Activated naive CD8-positive, alpha-beta T cell treated with anti-CD3 and anti-CD28 coated beads, Interleukin-2, amount 10 ng/mL, durations not matched to agents 7 days and 5 days (primary cell): ENCODE measurements at regions of chr1 and their contacts with region 1.

Region 1: DNA sequence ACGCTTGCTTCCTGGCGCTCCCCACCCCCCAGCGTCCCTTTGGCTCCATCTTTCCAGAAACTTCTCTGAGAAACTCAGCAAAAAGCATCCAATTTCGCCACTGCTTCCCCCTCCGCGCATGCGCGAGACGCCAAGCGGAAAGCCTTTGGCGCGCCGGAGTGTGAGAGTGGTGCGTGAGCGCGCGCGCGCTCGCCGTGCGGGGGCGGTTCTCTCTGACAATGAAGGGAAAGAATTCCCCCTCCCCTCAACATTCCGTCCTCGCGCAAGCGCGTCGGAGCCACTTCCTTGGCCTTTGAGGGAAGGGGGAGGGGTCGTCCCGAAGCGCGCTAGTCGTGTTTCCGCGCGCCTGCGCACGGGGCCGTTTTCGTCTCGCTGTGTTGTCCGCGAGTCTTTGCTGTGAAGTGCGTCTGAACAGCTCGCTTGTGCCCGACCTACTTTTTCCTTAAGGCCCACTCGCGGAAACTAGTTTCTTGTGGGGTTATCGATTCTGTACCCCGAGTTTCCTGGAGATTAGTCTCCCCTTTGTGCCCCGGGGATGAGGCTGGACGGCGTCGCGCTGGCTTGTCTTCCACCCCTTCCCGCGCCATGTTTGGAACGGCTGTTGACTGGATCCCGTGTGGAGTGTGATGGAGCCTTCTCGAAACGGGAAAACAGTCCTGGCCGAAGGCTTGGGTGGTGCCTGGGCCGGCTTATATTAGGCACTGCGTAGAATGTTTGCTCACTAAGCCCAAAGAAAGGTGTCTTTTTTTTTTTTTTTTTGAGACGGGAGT is 11.6 kb upstream of the SPEN start:
- DNase-seq: peak; percentile 99
- ATAC-seq: peak; percentile 64
- H3K4me3 Mint-ChIP-seq: peak overlapping the region; percentile 93
- H3K27ac Mint-ChIP-seq: peak overlapping the region; percentile 99
- H3K4me1 Mint-ChIP-seq: peaks cover 24% of the 10 kb centered on the region
- H3K27me3 Mint-ChIP-seq: no peaks in the 10 kb centered on the region

Region 2: DNA sequence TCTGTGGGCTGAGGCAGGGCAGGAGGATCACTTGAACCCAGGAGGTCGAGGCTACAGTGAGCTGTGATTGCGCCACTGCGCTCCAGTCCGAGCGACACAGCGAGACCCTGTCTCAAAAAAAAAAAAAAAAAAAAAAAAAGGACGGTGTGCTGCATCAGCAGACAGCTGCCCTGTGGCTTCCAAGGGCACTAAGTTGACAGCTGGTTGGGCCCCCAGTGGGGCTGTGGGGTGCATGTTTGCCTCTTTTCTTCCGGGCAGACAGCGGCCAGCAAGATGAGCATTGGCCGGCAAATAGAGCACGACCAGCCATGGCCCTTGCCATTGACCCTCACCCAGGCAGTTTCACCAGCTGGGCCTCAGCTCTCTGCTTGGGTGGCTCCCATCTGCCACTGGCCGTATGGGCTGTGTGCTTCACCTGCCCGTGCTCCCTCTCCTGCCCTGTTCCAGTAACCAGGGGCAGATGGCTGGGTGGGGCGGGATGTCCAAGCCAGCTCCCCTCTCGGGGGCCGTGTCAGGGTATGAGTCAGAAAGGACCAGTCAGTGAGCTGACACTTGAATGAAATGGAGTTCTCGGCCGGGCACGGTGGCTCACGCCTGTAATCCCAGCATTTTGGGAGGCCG is 112.2 kb before region 1 on chr1:
- POLR2A ChIA-PET with region 1: no interaction called
- DNase-seq: no peak
- ATAC-seq: no peak
- H3K4me3 Mint-ChIP-seq: no peak overlapping the region
- H3K27ac Mint-ChIP-seq: no peak overlapping the region
- H3K4me1 Mint-ChIP-seq: no peaks in the 10 kb centered on the region
- H3K27me3 Mint-ChIP-seq: no peaks in the 10 kb centered on the region

Region 3: DNA sequence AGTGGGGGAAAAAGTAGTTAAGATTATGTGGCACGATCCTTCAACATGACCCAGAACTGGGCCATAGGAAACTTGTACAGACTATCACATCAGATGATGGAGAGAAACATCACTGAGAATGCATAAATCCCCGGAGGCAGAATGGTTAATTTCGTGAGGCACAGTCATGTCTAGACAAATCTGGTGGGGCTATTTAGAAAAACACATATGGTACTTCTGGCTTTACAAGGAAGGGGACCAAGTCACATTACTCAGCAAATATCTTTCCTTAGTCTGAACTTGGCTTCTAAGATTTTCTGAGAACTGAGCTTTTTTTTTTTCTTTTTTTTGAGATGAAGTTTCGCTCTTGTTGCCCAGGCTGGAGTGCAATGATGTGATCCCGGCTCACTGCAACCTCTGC is 19.3 kb before region 1 on chr1:
- POLR2A ChIA-PET with region 1: interaction called, 12 read pairs
- DNase-seq: no peak
- ATAC-seq: no peak
- H3K4me3 Mint-ChIP-seq: no peak overlapping the region
- H3K27ac Mint-ChIP-seq: no peak overlapping the region
- H3K4me1 Mint-ChIP-seq: peaks cover 7% of the 10 kb centered on the region
- H3K27me3 Mint-ChIP-seq: no peaks in the 10 kb centered on the region

Region 4: DNA sequence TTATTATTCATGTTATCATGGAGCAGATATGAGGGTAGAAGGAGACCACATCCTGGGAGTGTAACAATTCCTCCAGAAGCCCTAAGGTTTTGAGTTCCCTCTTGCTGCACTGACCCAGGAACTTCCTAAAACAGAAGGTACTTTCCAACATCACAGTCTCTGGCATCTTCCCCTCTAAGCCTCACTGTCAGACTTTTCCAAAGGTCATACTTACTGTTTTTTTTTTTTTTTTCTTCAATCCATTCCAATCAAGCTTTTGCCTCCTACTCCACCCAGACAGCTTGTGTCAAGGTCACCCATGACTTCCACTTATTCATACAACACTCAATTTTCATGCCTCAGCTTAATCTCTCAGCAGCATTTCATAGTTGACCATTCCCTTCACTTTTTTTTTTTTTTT is 10.1 kb before region 1 on chr1:
- POLR2A ChIA-PET with region 1: interaction called, 23 read pairs
- DNase-seq: no peak
- ATAC-seq: no peak
- H3K4me3 Mint-ChIP-seq: no peak overlapping the region
- H3K27ac Mint-ChIP-seq: no peak overlapping the region
- H3K4me1 Mint-ChIP-seq: peaks cover 18% of the 10 kb centered on the region
- H3K27me3 Mint-ChIP-seq: no peaks in the 10 kb centered on the region

Region 5: DNA sequence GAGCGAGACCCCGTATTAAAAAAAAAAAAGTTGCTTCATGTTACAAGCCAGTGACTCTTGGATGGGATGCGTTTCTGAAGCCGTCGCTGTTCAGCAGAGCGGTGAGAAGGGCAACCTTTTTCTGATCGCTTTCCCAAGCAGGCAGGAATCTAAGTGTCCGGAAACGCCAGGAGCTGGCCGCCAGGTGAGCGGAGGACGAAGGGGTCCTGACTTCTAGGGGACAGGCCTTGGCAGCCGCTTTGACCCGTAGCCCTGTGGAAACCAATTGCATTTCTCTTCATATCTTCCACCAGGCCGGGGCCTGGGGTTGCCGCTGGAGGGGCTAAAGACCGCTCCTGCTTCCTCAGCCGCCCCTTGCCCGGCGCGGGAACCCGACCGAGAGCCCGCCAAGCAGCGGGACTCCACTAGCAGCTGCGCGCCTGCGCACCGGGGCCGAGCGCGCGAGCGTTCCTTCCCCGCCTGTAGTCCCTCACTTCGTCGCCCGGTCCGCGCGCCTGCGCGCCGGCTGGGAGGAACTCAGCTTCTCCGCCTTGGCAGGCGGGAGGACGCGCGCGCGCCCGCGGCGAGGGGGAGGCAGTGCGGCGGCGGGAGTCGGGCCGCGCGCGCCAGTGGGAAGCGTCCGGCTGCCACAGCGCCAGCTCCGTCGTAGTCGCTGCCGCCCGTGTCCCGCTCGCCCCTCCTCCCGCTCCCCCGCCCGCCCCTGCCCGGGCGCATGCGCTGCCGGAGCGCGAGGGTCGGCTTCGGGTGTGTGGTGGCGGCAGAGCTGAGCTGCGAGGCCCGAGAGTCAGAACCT is 11.4 kb after region 1 on chr1 and contains the start of gene SPEN:
- POLR2A ChIA-PET with region 1: interaction called, 159 read pairs
- DNase-seq: peak; percentile 99
- ATAC-seq: peak; percentile 87
- H3K4me3 Mint-ChIP-seq: peak within 1 kb of the TSS; percentile 98
- H3K27ac Mint-ChIP-seq: peak within 1 kb of the TSS; percentile 97
- H3K4me1 Mint-ChIP-seq: peaks cover 41% of the 10 kb centered on the region
- H3K27me3 Mint-ChIP-seq: no peaks in the 10 kb centered on the region
- total RNA-seq, gene SPEN: 68.8 to 69.8 TPM

Region 6: GRCh38 chr1:15949453-15950245 is 113.7 kb after region 1 on chr1:
- POLR2A ChIA-PET with region 1: no interaction called
- DNase-seq: peak; percentile 58
- ATAC-seq: peak; percentile 72
- H3K4me3 Mint-ChIP-seq: peak overlapping the region; percentile 22
- H3K27ac Mint-ChIP-seq: peak overlapping the region; percentile 85
- H3K4me1 Mint-ChIP-seq: peaks cover 45% of the 10 kb centered on the region
- H3K27me3 Mint-ChIP-seq: no peaks in the 10 kb centered on the region